Endothelial cell of umbilical vein (primary cell): ENCODE measurements at regions of chr9 and their contacts with region 1.

Region 1: GRCh38 chr9:5186416-5187169 is 1.2 kb upstream of the INSL6 start:
- DNase-seq: peak; percentile 69
- H3K4me3 ChIP-seq: no peak overlapping the region
- H3K27ac ChIP-seq: no peak overlapping the region
- H3K4me1 ChIP-seq: no peaks in the 10 kb centered on the region
- H3K27me3 ChIP-seq: no peaks in the 10 kb centered on the region
- CTCF ChIP-seq: peak; percentile 64 to 73
- POLR2A ChIP-seq: no peak

Region 2: DNA sequence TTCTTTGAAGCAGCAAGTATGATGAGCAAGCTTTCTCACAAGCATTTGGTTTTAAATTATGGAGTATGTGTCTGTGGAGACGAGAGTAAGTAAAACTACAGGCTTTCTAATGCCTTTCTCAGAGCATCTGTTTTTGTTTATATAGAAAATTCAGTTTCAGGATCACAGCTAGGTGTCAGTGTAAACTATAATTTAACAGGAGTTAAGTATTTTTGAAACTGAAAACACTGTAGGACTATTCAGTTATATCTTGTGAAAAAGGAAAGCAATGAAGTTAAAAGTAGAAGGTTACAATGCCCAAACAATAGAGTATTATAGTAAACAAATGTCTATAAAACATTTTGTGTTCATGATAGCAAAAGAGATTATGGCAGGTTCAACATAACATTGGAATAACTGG is 112.9 kb before region 1 on chr9:
- CTCF ChIA-PET with region 1: no interaction called
- POLR2A ChIA-PET with region 1: no interaction called
- dilution Hi-C with region 1: no loop called
- intact Hi-C with region 1: no loop called
- DNase-seq: no peak
- H3K4me3 ChIP-seq: no peak overlapping the region
- H3K27ac ChIP-seq: no peak overlapping the region
- H3K4me1 ChIP-seq: peaks cover 11% of the 10 kb centered on the region
- H3K27me3 ChIP-seq: no peaks in the 10 kb centered on the region
- CTCF ChIP-seq: no peak
- POLR2A ChIP-seq: no peak

Region 3: GRCh38 chr9:5231212-5231611 is 44.6 kb after region 1 on chr9 and contains the start of gene INSL4:
- CTCF ChIA-PET with region 1: no interaction called
- POLR2A ChIA-PET with region 1: no interaction called
- dilution Hi-C with region 1: no loop called
- intact Hi-C with region 1: no loop called
- DNase-seq: no peak
- H3K4me3 ChIP-seq: no peak within 1 kb of the TSS
- H3K27ac ChIP-seq: no peak within 1 kb of the TSS
- H3K4me1 ChIP-seq: no peaks in the 10 kb centered on the region
- H3K27me3 ChIP-seq: peaks cover 20 to 23% of the 10 kb centered on the region in 2 experiments
- CTCF ChIP-seq: no peak
- POLR2A ChIP-seq: no peak
- total RNA-seq, gene INSL4: not detected in 2 replicates

Region 4: DNA sequence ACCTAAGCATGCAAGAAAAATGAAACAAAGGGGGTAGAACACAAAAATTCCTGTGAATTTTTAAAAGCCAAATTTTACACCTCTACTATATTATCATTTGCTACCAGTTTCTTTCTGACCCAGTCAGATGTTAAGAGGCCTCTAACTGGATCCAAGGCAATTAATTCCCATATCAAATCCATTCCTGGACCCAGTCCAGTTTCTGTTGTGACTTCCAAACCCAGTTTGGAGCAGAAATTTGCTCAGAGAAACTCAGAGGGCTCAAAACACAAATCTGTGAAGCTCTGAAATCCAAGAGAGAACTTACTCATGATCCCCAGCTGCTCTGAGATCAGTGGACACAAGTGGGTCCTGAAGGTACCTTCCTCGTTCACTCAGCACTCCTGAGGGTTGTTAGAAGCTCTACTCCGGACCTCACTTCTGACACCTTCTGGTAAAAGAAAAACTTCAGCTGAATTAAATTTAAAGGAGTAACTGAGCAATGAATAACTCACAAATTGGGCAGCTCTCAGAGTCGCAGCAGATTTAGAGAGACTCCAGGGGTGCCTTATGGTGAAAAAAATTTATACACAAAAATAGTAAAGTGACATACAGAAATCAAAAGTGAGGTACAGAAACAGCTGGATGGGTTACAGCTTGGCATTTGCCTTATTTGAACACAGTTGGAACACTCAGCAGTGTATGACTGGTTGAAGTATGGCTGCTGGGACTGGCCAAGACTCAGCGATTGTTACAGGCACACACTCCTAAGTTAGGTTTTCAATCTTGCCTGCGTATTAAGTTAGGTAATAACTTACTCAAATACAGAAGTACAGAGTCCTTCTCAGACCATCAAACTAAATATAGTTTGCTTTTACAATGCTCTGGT is 77.0 kb after region 1 on chr9:
- CTCF ChIA-PET with region 1: interaction called, 16 read pairs
- POLR2A ChIA-PET with region 1: no interaction called
- dilution Hi-C with region 1: no loop called
- intact Hi-C with region 1: no loop called
- DNase-seq: peak; percentile 47
- H3K4me3 ChIP-seq: no peak overlapping the region
- H3K27ac ChIP-seq: no peak overlapping the region
- H3K4me1 ChIP-seq: peaks cover 7% of the 10 kb centered on the region
- H3K27me3 ChIP-seq: no peaks in the 10 kb centered on the region
- CTCF ChIP-seq: no peak
- POLR2A ChIP-seq: no peak

Region 5: GRCh38 chr9:5321058-5321457 is 134.5 kb after region 1 on chr9:
- CTCF ChIA-PET with region 1: interaction called, 34 read pairs
- POLR2A ChIA-PET with region 1: no interaction called
- dilution Hi-C with region 1: no loop called
- intact Hi-C with region 1: loop called (anchors 1 kb)
- DNase-seq: no peak
- H3K4me3 ChIP-seq: no peak overlapping the region
- H3K27ac ChIP-seq: no peak overlapping the region
- H3K4me1 ChIP-seq: peaks cover 5% of the 10 kb centered on the region
- H3K27me3 ChIP-seq: peaks cover 0 to 7% of the 10 kb centered on the region in 2 experiments
- CTCF ChIP-seq: peak in 1 of 2 donors; percentile 6
- POLR2A ChIP-seq: no peak

Region 6: GRCh38 chr9:5425006-5425628 is 238.5 kb after region 1 on chr9:
- CTCF ChIA-PET with region 1: interaction called, 151 read pairs
- POLR2A ChIA-PET with region 1: no interaction called
- dilution Hi-C with region 1: loop called (anchors 25 kb)
- intact Hi-C with region 1: loop called (anchors 1 kb)
- DNase-seq: peak; percentile 42
- H3K4me3 ChIP-seq: no peak overlapping the region
- H3K27ac ChIP-seq: no peak overlapping the region
- H3K4me1 ChIP-seq: no peaks in the 10 kb centered on the region
- H3K27me3 ChIP-seq: no peaks in the 10 kb centered on the region
- CTCF ChIP-seq: peak; percentile 20 to 32
- POLR2A ChIP-seq: no peak

Region 7: DNA sequence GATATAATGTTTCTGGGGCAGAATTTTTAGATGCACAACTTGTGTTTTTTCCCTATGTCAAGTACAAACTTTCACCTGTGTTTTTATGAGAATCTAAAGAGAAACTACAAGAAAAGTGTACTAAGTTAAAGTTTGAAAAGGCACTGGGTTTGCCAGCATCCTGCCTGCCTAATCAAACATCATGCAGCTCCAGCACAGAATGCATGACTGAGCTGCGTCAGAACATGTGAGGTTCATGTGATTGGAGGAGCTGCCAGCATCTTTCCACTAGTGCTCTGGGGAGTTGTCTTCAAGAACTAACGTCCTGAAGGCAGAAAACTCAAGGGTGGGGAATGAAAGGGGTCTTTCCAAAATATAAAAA is 396.2 kb after region 1 on chr9:
- CTCF ChIA-PET with region 1: interaction called, 52 read pairs
- POLR2A ChIA-PET with region 1: no interaction called
- dilution Hi-C with region 1: no loop called
- intact Hi-C with region 1: no loop called
- DNase-seq: no peak
- H3K4me3 ChIP-seq: no peak overlapping the region
- H3K27ac ChIP-seq: peak overlapping the region; percentile 10
- H3K4me1 ChIP-seq: peaks cover 36% of the 10 kb centered on the region
- H3K27me3 ChIP-seq: no peaks in the 10 kb centered on the region
- CTCF ChIP-seq: no peak
- POLR2A ChIP-seq: no peak

Region 8: GRCh38 chr9:5773324-5773999 is 586.9 kb after region 1 on chr9:
- CTCF ChIA-PET with region 1: no interaction called
- POLR2A ChIA-PET with region 1: no interaction called
- dilution Hi-C with region 1: no loop called
- intact Hi-C with region 1: no loop called
- DNase-seq: no peak
- H3K4me3 ChIP-seq: no peak overlapping the region
- H3K27ac ChIP-seq: no peak overlapping the region
- H3K4me1 ChIP-seq: no peaks in the 10 kb centered on the region
- H3K27me3 ChIP-seq: no peaks in the 10 kb centered on the region
- CTCF ChIP-seq: no peak
- POLR2A ChIP-seq: no peak